ENCODE measurements at regions of chr10 and their contacts with region 1.

Region 1: GRCh38 chr10:101042667-101043355 is 11.8 kb downstream of the SFXN3 start:
- DNase-seq: peak; percentile 98
- H3K4me3 ChIP-seq: peak overlapping the region; percentile 34 to 56 (median 51)
- H3K27ac ChIP-seq: peak overlapping the region; percentile 81 to 87 (median 84)
- H3K4me1 ChIP-seq: peaks cover 0 to 19% (median 13%) of the 10 kb centered on the region in 4 donors
- H3K27me3 ChIP-seq: peaks cover 6 to 20% (median 14%) of the 10 kb centered on the region in 3 donors
- CTCF ChIP-seq: no peak
- EP300 ChIP-seq: no peak
- POLR2A ChIP-seq: peak in 1 of 2 donors; percentile 35

Region 2: DNA sequence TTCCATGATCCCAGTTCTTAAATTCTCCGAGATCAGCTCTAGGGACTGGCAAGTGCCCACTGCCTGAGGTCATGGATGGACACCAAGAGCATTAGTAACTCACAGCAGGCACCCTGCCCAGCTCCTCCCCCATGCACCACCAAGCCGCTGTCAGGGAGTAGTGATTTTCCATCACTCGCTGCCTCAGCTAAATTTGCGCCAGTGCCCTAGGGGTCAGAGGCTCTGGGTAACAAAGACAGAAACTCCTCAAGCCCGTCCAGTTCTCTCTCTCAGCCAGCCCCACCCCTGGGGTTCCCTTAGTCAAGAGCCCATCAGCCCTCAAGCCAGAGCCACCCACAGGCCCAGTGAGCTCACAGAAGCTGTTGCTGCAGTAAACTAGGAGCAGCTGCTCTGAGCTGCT is 267.4 kb before region 1 on chr10:
- intact Hi-C with region 1: no loop called
- DNase-seq: peak; percentile 48
- H3K4me3 ChIP-seq: no peak overlapping the region
- H3K27ac ChIP-seq: no peak overlapping the region
- H3K4me1 ChIP-seq: no peaks in the 10 kb centered on the region
- H3K27me3 ChIP-seq: peaks cover 0 to 34% (median 0%) of the 10 kb centered on the region in 3 donors
- CTCF ChIP-seq: no peak
- EP300 ChIP-seq: no peak
- POLR2A ChIP-seq: no peak

Region 3: GRCh38 chr10:101060036-101060950 is 17.5 kb after region 1 on chr10:
- intact Hi-C with region 1: loop called (anchors 2 kb)
- DNase-seq: peak; percentile 97
- H3K4me3 ChIP-seq: peak overlapping the region; percentile 77 to 83 (median 79)
- H3K27ac ChIP-seq: peak overlapping the region; percentile 93 to 98 (median 94)
- H3K4me1 ChIP-seq: peaks cover 0 to 38% (median 30%) of the 10 kb centered on the region in 4 donors
- H3K27me3 ChIP-seq: peaks cover 9 to 31% (median 30%) of the 10 kb centered on the region in 3 donors
- CTCF ChIP-seq: peak; percentile 68 to 83 (median 76)
- EP300 ChIP-seq: no peak
- POLR2A ChIP-seq: no peak

Region 4: DNA sequence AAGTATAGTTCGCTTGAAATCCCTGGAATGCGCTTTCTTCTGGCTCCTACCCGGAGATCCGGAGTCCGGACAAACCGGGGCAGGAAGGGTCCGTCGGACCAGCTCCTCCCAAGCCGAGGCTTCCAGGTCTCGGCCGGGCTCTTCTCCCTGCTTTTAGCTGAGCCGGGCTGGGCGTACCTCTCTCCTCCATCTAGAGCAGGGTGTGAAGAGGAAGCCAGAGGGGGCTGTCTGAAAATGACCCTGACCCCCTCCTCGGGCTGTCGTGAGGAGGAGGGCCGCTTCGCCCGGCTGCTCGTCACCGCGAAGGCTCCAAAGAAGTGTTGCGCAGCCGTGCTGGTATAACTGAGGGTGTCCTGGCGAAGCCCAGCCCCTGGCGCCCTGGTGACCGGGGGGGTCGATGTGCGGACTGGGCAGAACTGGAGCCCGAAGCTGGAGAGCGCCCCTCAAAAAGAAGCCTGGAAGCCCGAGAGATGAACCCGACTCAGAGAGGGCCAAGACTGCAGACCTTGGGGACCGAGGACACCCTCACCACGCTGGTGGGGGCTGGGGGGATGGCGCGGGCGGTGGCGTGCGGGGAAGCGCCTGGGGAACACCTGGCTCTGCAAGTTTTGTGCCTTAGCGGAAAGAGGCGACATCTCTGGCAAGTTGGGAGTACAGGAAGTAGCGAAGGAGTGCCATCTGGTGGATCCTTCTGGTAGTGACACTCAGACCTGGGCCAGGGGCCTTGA is 24.7 kb after region 1 on chr10:
- intact Hi-C with region 1: loop called (anchors 1 kb)
- DNase-seq: peak; percentile 85
- H3K4me3 ChIP-seq: peak overlapping the region; percentile 21 to 50 (median 46)
- H3K27ac ChIP-seq: peak overlapping the region in 2 of 4 donors; percentile 59 to 62
- H3K4me1 ChIP-seq: peaks cover 0 to 39% (median 31%) of the 10 kb centered on the region in 4 donors
- H3K27me3 ChIP-seq: peaks cover 15 to 64% (median 58%) of the 10 kb centered on the region in 3 donors
- CTCF ChIP-seq: peak; percentile 87 to 91 (median 88)
- EP300 ChIP-seq: no peak
- POLR2A ChIP-seq: no peak